PC-9 (cell line): ENCODE measurements at regions of chr2 and their contacts with region 1.

Region 1: DNA sequence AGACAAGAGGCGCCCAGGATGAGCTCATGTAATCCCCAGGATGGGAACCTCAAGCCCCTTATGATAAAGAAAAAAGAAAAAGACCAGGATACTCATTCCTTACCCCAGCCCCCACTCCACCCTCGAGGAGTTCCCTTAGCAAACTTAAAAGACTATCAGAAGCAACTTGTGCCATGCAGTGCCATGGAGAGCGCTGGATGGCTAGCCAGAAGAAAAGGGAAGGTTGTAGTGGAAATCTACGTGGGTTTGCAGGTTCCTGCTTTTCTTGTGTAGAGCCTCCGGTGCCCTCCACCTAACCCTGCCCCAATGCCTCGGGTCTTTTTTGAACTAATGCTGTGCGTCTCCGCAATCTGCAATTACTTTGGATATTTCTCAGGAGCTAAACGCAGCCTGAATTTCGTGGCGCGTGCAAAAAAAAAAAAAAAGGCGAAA is 16.2 kb upstream of the BCL11A start:
- DNase-seq: no peak
- H3K4me3 ChIP-seq: no peak overlapping the region
- H3K27ac ChIP-seq: no peak overlapping the region
- H3K4me1 ChIP-seq: no peaks in the 10 kb centered on the region
- H3K27me3 ChIP-seq: peaks cover 80% of the 10 kb centered on the region
- CTCF ChIP-seq: no peak

Region 2: GRCh38 chr2:58788402-58788801 is 1781.3 kb before region 1 on chr2:
- CTCF ChIA-PET with region 1: no interaction called
- POLR2A ChIA-PET with region 1: interaction called, 22 read pairs
- intact Hi-C with region 1: no loop called
- DNase-seq: no peak
- H3K4me3 ChIP-seq: no peak overlapping the region
- H3K27ac ChIP-seq: no peak overlapping the region
- H3K4me1 ChIP-seq: no peaks in the 10 kb centered on the region
- H3K27me3 ChIP-seq: peaks cover 8% of the 10 kb centered on the region; the same call in 1 of the 2 replicates
- CTCF ChIP-seq: no peak

Region 3: DNA sequence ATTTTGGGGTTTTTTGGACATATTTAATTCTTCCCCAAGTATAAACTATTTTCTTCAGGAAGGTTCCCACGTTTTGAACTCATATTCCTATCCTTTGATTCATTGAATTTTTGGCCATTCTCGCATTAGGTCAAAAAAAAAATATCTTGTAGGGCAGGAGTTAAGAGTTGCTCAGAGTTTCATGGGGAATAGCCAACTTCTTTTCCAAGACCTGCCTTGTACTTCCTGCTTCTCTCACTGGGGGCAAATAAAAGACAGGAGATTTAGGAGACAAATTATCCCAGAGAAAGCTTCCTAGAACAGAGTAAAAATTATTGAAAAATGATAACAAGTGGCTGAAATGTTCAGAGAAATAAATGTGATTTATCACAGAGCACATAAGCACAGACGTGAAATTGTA is 39.0 kb after region 1 on chr2:
- CTCF ChIA-PET with region 1: no interaction called
- POLR2A ChIA-PET with region 1: no interaction called
- intact Hi-C with region 1: no loop called
- DNase-seq: no peak
- H3K4me3 ChIP-seq: no peak overlapping the region
- H3K27ac ChIP-seq: no peak overlapping the region
- H3K4me1 ChIP-seq: no peaks in the 10 kb centered on the region
- H3K27me3 ChIP-seq: peaks cover 77% of the 10 kb centered on the region
- CTCF ChIP-seq: no peak